ENCODE measurements at regions of chr17 and their contacts with region 1.

Region 1: DNA sequence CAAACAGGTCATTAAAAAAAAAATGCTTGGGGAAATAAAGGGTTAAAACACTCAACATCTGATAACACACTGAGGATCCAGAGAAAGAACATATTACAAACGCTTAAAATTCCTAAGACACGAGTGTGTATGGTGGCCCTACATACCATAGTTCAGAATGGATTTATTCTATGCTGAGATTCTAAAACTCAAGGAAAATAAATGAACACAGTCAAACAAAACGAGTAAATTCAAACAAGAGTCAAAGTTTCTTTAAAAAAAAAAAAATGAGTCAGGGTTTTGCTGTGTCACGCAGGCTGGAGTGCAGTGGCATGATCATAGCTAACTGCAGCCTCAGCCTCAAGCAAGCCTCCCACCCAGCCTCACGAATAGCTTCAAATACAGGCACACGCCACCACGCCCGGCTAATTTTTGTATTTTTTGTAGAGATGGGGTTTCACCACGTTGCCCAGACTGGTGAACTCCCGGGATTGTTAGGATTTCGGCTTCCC is 17.4 kb downstream of the CRK start:
- DNase-seq: no peak
- H3K4me3 ChIP-seq: no peak overlapping the region
- H3K27ac ChIP-seq: peak overlapping the region in 2 of 4 donors; percentile 7 to 46
- H3K4me1 ChIP-seq: peaks cover 0 to 26% (median 0%) of the 10 kb centered on the region in 3 donors
- H3K27me3 ChIP-seq: no peaks in the 10 kb centered on the region
- CTCF ChIP-seq: no peak
- POLR2A ChIP-seq: no peak

Region 2: DNA sequence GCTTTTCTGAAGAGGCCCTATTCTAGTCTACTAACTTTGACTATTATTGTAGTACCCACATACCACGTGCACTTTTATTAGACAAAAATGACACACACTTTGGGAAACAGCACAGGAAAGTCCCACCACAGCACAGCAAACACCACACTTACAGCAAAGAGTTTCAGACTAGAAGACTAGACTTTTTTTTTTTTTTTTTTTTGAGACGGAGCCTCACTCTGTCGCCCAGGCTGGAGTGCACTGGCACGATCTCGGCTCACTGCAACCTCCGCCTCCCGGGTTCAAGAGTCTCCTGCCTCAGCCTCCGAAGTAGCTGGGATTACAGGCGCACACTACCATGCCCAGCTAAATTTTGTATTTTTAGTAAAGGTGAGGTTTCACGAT is 58.7 kb before region 1 on chr17:
- intact Hi-C with region 1: loop called (anchors 10 kb)
- DNase-seq: no peak
- H3K4me3 ChIP-seq: peak overlapping the region in 1 of 4 donors; percentile 15
- H3K27ac ChIP-seq: peak overlapping the region in 3 of 4 donors; percentile 34 to 57 (median 50)
- H3K4me1 ChIP-seq: peaks cover 50 to 100% (median 78%) of the 10 kb centered on the region in 3 donors
- H3K27me3 ChIP-seq: no peaks in the 10 kb centered on the region
- CTCF ChIP-seq: no peak
- POLR2A ChIP-seq: no peak

Region 3: DNA sequence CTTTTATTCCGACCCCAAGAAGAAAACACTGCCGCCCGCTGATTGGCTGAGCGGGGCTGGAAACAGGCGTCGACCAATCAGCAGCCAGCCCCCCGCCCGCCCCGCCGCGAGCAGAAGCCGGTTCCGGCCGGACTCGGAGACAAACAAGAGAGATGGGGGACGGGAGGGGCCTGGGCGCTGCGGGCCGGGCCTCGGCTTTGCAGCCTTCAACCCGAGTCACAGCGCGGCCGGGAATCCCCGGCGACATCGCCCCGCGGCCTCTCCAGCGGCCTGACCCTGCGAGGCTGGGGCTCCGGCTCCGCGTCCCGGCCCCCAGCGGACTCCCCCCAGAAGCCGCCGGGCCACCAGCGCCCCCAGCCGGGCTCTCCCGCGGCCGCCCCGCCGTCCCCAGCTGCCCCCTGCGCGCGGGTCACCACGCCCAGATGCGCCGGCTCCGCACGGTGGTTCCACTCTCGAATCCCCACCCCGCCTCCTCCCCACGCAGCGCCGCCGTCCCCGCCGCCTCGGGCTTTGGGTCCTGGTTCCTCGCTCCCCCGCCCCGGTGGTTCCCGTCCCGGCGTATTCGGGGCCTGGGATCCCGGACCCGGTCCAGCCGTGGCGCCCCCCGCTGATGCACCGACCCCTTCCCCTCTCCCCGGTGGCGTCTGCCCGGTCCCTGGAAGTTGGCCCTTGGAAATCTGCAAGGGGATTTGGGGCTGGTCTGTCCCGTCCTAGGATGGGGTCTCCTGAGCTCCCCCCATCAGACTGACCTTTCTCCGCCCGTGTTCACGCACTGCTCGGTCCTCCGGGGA is 190.4 kb after region 1 on chr17:
- intact Hi-C with region 1: no loop called
- DNase-seq: peak; percentile 81
- H3K4me3 ChIP-seq: peak overlapping the region; percentile 60 to 96 (median 74)
- H3K27ac ChIP-seq: peak overlapping the region; percentile 76 to 95 (median 88)
- H3K4me1 ChIP-seq: peaks cover 20 to 67% (median 28%) of the 10 kb centered on the region in 3 donors
- H3K27me3 ChIP-seq: peaks cover 0 to 25% (median 0%) of the 10 kb centered on the region in 4 donors
- CTCF ChIP-seq: peak in 5 of 6 experiments; percentile 22 to 48 (median 37)
- POLR2A ChIP-seq: peak in 1 of 4 donors; percentile 65